Breast epithelium (tissue), 4 donors: ENCODE measurements at regions of chr4 and their contacts with region 1.

Region 1: GRCh38 chr4:113020966-113021365 is 28.5 kb upstream of the ANK2 start:
- DNase-seq: no peak
- H3K4me3 ChIP-seq: no peak overlapping the region
- H3K27ac ChIP-seq: no peak overlapping the region
- H3K4me1 ChIP-seq: no peaks in the 10 kb centered on the region
- H3K27me3 ChIP-seq: no peaks in the 10 kb centered on the region
- CTCF ChIP-seq: no peak
- POLR2A ChIP-seq: no peak

Region 2: DNA sequence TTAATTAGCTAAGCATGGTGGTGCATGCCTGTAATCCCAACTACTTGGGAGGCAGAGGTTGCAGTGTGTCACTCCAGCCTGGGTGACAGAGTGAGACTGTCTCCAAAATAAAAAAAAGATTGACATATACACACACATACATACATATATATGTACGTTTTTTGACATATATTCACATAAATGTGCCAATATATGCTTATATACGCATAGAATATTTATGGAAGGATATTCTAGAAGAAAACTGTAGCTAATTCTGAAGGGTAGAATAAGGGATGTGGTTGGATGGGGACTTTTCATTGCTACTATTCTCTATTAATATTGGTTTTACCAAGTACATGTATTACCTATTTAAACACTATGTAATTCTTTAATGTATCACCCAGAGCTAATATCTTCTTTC is 404.0 kb before region 1 on chr4:
- intact Hi-C with region 1: no loop called
- DNase-seq: no peak
- H3K4me3 ChIP-seq: no peak overlapping the region
- H3K27ac ChIP-seq: no peak overlapping the region
- H3K4me1 ChIP-seq: no peaks in the 10 kb centered on the region
- H3K27me3 ChIP-seq: no peaks in the 10 kb centered on the region
- CTCF ChIP-seq: no peak
- POLR2A ChIP-seq: no peak

Region 3: GRCh38 chr4:113057891-113058290 is 36.9 kb after region 1 on chr4:
- intact Hi-C with region 1: loop called (anchors 2 kb)
- DNase-seq: no peak
- H3K4me3 ChIP-seq: no peak overlapping the region
- H3K27ac ChIP-seq: no peak overlapping the region
- H3K4me1 ChIP-seq: no peaks in the 10 kb centered on the region
- H3K27me3 ChIP-seq: no peaks in the 10 kb centered on the region
- CTCF ChIP-seq: no peak
- POLR2A ChIP-seq: no peak